CD8-positive, alpha-beta memory T cell (primary cell): ENCODE measurements at regions of chr18 and their contacts with region 1.

Region 1: DNA sequence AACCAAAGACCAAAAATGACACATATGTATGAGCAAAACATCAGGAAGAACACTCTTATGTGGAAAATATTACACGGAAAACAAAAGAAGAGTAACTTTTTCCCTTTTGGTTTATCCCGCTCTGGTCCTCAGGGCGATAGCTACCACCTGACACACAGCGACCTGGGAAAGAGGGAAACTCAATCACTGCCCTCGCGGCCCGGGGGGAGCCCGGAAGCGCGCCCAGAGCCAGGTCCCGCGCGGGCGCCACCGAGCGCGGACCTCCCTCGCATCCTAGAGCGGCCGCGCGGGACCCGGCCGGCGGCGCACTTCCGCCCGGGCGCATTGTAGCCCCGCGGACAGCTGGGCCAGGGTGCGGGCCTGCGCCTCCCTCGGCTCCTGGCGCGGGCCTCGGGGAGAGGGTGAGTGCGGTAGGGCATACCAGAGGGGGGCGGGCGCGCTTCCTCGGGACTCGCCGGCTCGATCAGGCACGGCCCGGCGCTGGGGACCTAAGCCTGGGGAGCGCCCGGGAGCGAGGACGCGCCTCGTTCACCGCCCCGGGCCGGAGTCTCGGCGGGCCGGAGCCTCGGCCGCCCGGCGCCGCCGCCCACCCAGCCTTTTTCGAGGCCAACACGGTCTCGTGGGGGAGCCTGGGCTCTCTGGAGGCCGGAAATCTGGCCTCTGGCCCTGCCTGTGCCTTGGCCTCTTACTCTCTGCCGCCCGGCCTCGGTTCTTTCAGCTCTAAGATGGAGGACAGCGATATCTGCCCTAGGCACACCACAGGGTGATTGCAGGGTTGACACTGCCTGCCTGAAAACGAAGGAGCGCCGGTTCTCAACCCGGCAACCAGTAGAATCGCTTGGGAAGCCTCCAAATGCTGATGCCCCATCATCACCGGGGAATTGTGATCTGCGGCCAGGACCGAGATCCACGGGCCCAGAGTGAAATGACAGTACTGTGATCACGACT is at the start of gene ELAC1:
- DNase-seq: peak; percentile 39 to 74 (median 67)
- H3K4me3 ChIP-seq: peak within 1 kb of the TSS; percentile 87
- H3K4me3 Mint-ChIP-seq: peak within 1 kb of the TSS; percentile 92 to 97 (median 95)
- H3K27ac ChIP-seq: peak within 1 kb of the TSS; percentile 93
- H3K27ac Mint-ChIP-seq: peak within 1 kb of the TSS; percentile 77 to 97 (median 94)
- H3K4me1 ChIP-seq: peaks cover 9% of the 10 kb centered on the region
- H3K4me1 Mint-ChIP-seq: peaks cover 22 to 37% (median 34%) of the 10 kb centered on the region in 3 donors
- H3K27me3 ChIP-seq: no peaks in the 10 kb centered on the region
- H3K27me3 Mint-ChIP-seq: peaks cover 0 to 6% of the 10 kb centered on the region in 2 donors
- total RNA-seq, gene ELAC1: 10.3 to 10.5 TPM

Region 2: GRCh38 chr18:50878345-50879301 is 89.4 kb before region 1 on chr18 and contains the start of gene ME2:
- CTCF ChIA-PET with region 1: interaction called, 3 read pairs
- POLR2A ChIA-PET with region 1: interaction called, 35 read pairs
- DNase-seq: peak; percentile 82 to 91 (median 86)
- H3K4me3 ChIP-seq: peak within 1 kb of the TSS; percentile 83
- H3K4me3 Mint-ChIP-seq: peak within 1 kb of the TSS; percentile 94 to 99 (median 98)
- H3K27ac ChIP-seq: peak within 1 kb of the TSS; percentile 85
- H3K27ac Mint-ChIP-seq: peak within 1 kb of the TSS; percentile 94 to 100 (median 99)
- H3K4me1 ChIP-seq: peaks cover 33% of the 10 kb centered on the region
- H3K4me1 Mint-ChIP-seq: peaks cover 26 to 41% (median 34%) of the 10 kb centered on the region in 3 donors
- H3K27me3 ChIP-seq: no peaks in the 10 kb centered on the region
- H3K27me3 Mint-ChIP-seq: peaks cover 4 to 5% of the 10 kb centered on the region in 2 donors
- total RNA-seq, gene ME2: 114 to 120 TPM